Common myeloid progenitor, CD34-positive (primary cell): ENCODE measurements at regions of chr9 and their contacts with region 1.

Region 1: GRCh38 chr9:89602978-89603766 is 1.6 kb upstream of the GADD45G start:
- DNase-seq: peak; percentile 88
- H3K4me3 ChIP-seq: peak overlapping the region in 6 of 7 experiments; percentile 43 to 73 (median 64)
- H3K27ac ChIP-seq: no peak overlapping the region
- H3K4me1 ChIP-seq: peaks cover 12 to 46% (median 41%) of the 10 kb centered on the region in 4 experiments
- H3K27me3 ChIP-seq: peaks cover 0 to 14% (median 0%) of the 10 kb centered on the region in 5 experiments

Region 2: GRCh38 chr9:89483592-89484522 is 119.3 kb before region 1 on chr9:
- CTCF ChIA-PET with region 1: no interaction called
- POLR2A ChIA-PET with region 1: no interaction called
- DNase-seq: peak in 2 of 3 donors; percentile 57 to 69
- H3K4me3 ChIP-seq: peak overlapping the region in 5 of 7 experiments; percentile 33 to 72 (median 68)
- H3K27ac ChIP-seq: no peak overlapping the region
- H3K4me1 ChIP-seq: peaks cover 5 to 56% (median 50%) of the 10 kb centered on the region in 4 experiments
- H3K27me3 ChIP-seq: no peaks in the 10 kb centered on the region

Region 3: DNA sequence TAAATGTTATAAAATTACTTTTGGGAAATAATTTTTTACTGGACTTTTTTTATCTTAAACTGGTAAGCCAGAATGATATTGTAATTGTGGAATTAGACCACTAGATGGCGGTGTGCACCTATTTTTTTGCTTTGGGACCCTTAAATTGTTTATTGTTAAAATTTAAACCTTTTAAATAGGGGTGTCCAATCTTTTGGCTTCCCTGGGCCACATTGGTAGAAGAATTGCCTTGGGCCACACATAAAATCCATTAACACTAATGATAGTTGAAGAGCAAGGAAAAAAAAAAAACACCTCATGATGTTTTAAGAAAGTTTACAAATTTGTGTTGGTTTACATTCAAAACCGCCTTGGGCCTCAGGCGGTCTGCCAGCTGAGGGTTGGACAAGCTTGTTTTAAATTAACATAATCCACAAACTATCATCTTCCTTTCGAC is 26.8 kb before region 1 on chr9:
- CTCF ChIA-PET with region 1: interaction called, 48 read pairs
- POLR2A ChIA-PET with region 1: interaction called, 4 read pairs
- DNase-seq: peak; percentile 63 to 74 (median 69)
- H3K4me3 ChIP-seq: no peak overlapping the region
- H3K27ac ChIP-seq: no peak overlapping the region
- H3K4me1 ChIP-seq: peaks cover 4 to 24% (median 17%) of the 10 kb centered on the region in 4 experiments
- H3K27me3 ChIP-seq: no peaks in the 10 kb centered on the region

Region 4: DNA sequence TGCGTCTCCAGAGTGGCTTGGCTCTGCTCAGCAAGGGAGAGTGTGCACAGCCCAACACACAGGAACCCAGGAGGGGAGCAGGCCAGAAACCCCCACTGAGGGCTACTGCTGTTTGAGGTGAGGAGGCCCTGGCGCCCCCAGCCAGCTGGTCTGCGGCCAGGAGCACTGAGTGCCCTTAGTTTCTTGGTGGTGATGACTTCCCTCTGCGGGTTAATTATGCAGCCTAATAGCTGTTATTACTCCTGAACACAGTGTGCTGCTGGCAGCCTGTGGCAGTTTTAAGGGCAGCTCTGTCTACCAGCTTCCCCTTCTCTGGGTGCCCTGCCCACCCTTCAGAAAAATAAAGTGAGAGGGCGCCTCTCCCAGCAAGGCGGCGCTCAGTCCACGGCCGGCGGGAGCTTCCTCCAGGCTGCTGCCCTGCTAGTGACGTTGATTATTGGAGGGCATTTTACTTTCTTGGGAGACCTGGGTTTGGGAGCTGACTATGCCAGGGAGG is 20.8 kb after region 1 on chr9:
- CTCF ChIA-PET with region 1: interaction called, 25 read pairs
- POLR2A ChIA-PET with region 1: interaction called, 6 read pairs
- DNase-seq: peak; percentile 62 to 92 (median 90)
- H3K4me3 ChIP-seq: peak overlapping the region in 1 of 7 experiments; percentile 2
- H3K27ac ChIP-seq: no peak overlapping the region
- H3K4me1 ChIP-seq: peaks cover 0 to 24% (median 19%) of the 10 kb centered on the region in 4 experiments
- H3K27me3 ChIP-seq: peaks cover 0 to 16% (median 6%) of the 10 kb centered on the region in 5 experiments

Region 5: DNA sequence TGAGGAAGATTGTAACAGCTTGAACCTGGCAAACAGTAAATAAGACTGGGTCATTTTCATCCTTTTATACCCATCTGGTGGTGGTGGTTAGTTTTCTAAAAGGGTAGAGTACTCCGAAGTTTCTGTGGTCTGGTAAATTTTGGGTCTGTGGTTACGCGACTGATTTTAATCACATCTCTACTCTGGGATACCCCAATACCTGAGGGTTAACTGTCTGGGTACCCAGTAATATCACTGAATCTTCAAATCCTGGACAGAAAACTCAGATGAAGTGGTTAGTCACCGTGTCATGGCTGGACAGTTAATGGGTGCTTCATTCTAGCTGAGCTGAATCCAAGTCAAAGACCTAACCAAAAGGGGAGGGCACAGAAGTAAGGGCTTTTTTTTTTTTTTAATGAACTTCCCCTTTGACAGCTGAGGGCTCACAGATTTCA is 475.8 kb after region 1 on chr9:
- CTCF ChIA-PET with region 1: interaction called, 10 read pairs
- POLR2A ChIA-PET with region 1: no interaction called
- DNase-seq: peak in 2 of 3 donors; percentile 68 to 76
- H3K4me3 ChIP-seq: no peak overlapping the region
- H3K27ac ChIP-seq: no peak overlapping the region
- H3K4me1 ChIP-seq: peaks cover 0 to 6% (median 3%) of the 10 kb centered on the region in 4 experiments
- H3K27me3 ChIP-seq: peaks cover 0 to 9% (median 0%) of the 10 kb centered on the region in 5 experiments

Region 6: DNA sequence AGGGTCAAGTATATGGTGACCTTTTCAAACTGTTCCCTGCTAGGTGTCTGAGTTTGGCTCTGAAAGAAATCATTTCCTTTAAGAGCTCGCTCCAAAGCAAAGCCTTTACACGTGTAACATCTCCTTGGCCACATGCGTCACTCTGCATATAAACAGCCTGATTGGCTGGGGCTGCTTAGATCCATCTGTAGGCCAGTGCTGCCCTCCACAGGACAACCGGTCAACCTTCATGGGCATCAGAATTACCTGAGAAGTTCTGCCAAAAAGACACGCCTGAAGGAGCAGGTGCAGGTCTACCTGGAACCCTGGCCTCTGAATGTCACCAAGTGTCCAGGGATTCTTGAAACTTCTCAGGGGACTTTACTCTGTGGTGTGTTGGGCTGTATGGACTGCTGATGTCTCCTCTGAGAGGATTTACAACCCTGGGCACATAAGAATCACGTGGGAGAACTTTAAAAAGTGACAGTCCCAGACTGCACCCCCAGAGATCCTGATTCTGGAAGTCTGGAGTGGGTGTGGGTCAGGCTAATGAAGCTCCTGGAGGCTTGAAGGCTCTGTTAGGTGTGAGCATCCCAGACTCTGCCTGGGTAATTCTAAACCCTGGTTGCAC is 499.2 kb after region 1 on chr9:
- CTCF ChIA-PET with region 1: interaction called, 323 read pairs
- POLR2A ChIA-PET with region 1: interaction called, 3 read pairs
- DNase-seq: peak; percentile 90 to 94 (median 93)
- H3K4me3 ChIP-seq: no peak overlapping the region
- H3K27ac ChIP-seq: no peak overlapping the region
- H3K4me1 ChIP-seq: peaks cover 0 to 2% (median 0%) of the 10 kb centered on the region in 4 experiments
- H3K27me3 ChIP-seq: peaks cover 0 to 1% (median 0%) of the 10 kb centered on the region in 5 experiments